ENCODE measurements at regions of chr12 and their contacts with region 1.

Region 1: DNA sequence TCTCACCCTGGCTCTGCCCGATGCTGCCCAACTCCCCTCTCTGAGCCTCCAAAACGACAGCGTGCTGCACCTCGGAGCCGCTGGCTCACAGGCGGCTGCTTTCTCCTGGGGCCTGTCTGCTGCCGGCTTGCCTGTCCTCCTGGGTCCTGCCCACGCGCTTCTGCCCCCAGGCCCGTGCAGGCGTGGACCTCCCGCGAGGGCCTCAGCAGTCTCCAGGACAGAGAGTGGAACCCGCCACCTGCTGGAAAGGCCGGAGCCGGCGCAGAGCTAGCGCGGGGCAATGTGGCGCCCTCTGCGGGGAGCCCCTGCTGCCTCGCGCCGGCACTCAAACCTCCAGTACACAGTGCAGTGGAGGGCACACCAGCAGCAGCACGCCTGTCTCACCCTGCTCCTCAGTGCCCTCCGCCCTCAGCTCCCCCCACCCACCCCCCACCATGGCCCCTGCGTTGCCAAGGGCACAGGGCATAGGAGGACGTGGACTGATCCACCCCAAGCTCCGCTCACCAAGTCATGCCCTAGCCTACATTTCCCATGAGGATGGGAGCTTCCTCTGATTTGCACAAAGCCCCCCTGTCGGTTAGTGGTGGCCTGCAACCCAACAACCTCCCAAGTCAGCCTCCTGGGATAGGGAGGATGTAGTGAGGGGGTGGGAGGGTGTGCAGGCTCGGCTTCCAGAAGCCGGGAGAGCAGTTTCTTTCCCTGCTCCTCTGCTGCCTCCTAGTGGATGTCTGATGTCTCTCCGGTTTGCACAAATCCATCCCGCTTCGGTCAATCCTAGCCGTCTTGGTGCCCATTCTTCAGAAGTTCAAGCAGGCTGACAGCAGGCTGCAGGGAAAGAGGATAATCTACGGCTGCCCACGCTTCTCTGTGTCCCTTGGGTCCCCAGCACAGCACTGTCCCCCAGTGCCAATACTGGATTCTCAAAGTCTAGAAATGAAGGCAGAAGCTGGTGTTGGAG is 25.2 kb downstream of the KRT8 start:
- DNase-seq: no peak
- H3K4me3 ChIP-seq: no peak overlapping the region
- H3K27me3 ChIP-seq: no peaks in the 10 kb centered on the region
- CTCF ChIP-seq: peak; percentile 93

Region 2: DNA sequence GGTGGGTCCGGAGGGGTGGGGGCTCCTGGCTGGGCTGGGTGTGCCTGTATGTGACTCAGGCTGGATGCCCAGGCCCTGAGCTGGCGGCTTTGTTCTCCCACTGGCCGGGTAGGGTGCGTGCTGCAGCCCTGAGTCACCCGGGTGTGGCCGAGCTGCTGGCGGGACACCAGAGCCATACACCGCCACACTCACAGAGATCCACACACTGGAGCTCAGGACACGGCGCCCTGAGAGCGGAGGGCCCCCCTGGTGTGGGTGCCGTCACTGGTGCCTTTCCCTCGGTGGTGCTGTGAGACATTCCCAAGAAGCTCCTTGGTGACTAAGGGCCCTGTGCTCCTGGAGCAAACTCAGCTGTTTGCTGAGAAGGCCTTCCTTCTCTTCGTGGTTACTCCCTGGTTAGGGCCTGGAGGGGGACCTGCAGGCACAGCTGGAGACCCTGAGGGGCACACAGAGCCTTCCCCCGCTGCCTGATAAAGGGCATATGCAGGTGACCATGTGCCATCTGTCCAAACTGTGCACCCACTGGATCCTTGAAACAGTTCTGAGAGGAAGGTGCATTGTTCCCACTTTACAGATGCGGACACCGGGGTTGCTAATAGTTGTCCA is 732.2 kb before region 1 on chr12:
- CTCF ChIA-PET with region 1: interaction called, 61 read pairs
- POLR2A ChIA-PET with region 1: no interaction called
- DNase-seq: peak; percentile 97
- H3K4me3 ChIP-seq: no peak overlapping the region
- H3K27me3 ChIP-seq: no peaks in the 10 kb centered on the region
- CTCF ChIP-seq: no peak

Region 3: DNA sequence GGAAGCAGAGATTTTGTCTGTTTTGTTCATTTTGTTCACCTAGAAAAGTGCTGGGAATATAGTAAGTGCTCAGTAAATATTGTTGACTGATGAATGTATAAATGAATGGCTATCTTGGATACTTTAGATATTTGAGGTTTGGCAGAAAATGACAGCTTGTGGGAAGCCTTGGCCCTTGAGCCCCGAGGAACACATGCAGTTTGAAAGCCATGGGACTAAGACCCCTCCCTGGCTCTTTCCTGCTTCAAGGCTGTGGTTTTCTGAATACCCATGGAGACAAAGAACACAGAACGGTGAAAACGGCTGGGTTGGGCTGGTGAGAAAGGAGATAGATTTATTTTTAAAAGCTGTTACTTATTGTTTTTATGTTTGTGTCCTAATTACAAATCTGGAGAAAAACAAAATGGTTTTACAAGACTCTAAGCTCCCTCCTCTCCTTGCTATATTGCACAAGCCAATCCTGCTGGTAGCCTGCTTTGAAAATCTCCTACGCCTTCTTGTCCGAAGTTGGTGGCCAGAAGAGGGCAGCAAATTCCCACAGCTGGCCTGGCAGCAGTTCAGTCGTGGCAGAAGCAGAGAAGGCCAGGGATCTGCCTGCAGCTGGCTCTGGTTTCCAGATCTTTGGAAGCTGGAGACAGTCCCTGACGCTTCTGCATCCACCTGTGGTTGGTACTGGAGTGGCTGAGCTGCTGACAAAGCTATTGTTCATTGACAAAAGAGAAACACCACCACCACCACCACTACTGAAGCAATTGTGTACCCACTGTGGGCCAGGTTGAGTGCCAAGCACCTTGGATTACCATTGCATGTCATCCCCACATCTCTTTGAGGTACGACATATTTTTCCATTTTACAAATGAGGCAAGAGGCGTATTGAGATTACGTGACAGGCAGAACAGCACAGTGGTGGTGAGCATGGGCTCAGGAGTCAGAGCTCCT is 507.2 kb before region 1 on chr12:
- CTCF ChIA-PET with region 1: interaction called, 142 read pairs
- POLR2A ChIA-PET with region 1: no interaction called
- DNase-seq: peak; percentile 47
- H3K4me3 ChIP-seq: no peak overlapping the region
- H3K27me3 ChIP-seq: peaks cover 12% of the 10 kb centered on the region
- CTCF ChIP-seq: peak; percentile 93

Region 4: GRCh38 chr12:52390739-52391617 is 488.7 kb before region 1 on chr12:
- CTCF ChIA-PET with region 1: interaction called, 21 read pairs
- POLR2A ChIA-PET with region 1: no interaction called
- DNase-seq: no peak
- H3K4me3 ChIP-seq: no peak overlapping the region
- H3K27me3 ChIP-seq: peaks cover 9% of the 10 kb centered on the region; the same call in 1 of the 2 replicates
- CTCF ChIP-seq: peak; percentile 76

Region 5: DNA sequence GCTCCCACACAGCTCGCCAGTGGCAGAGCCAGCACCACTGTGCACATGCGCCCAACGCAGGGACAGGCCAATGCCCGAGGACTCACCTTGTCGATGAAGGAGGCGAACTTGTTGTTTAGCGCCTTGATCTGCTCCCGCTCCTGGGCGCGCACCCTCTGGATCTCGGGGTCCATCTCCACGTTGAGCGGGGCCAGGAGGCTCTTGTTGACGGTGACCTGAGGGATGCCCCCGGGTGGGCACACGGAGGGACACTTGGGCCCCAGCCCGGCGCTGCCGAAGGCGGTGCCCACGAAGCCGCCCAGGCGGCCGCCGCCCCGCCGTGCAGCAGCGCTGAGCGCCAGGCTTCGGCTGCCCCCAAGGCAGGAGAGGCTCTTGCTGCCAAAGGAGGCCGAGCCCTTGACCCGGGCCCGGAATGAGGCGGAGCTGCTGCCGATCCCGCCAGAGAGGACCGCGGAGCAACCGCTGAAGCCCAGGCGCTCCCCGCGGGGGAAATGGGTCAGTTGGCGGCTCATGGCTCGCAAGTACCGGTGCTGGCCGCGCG is 278.7 kb before region 1 on chr12 and contains the start of gene KRT72:
- CTCF ChIA-PET with region 1: interaction called, 13 read pairs
- POLR2A ChIA-PET with region 1: no interaction called
- DNase-seq: no peak
- H3K4me3 ChIP-seq: no peak within 1 kb of the TSS
- H3K27me3 ChIP-seq: peaks cover 21% of the 10 kb centered on the region
- CTCF ChIP-seq: no peak
- polyA plus RNA-seq, gene KRT72: not detected in 2 replicates

Region 6: DNA sequence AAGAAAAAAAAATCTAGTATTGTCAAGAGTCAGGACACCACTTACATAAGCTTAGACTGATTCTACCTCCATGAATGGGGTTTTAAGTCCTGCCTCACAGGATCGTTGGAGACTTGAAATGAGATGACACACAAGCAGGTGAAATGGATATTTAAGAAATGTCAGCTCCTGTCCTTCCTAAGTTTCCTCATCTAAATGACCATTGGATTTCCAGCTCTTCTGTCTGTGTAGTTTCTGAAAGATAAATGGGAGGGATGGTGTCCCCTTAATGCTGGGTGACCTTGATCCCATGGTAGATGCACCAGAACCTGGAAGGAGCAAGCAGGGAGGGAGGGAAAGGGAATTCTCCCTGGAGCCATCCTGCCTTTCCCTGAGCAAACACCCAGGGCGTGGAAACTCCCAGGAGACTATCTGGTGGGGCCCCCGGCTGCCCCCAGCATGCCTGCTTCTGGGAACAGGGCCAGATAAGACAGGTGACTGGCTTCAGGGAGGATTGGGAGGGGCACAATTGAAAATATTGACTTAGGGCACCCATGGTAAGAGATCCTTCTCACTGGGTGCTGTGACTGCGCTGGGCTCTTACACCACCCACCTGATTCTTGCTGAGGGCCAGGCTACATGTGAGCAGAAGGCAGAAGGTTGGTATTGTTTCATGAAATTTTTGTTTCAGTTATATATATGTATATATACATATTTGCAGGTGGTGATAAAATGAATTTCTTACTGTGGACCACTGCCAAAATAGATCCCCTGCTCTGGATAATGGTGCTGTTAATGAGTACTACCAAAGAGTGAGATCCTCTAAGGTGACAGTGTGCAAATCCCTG is 15.6 kb after region 1 on chr12:
- CTCF ChIA-PET with region 1: interaction called, 104 read pairs
- POLR2A ChIA-PET with region 1: no interaction called
- DNase-seq: no peak
- H3K4me3 ChIP-seq: no peak overlapping the region
- H3K27me3 ChIP-seq: no peaks in the 10 kb centered on the region
- CTCF ChIP-seq: no peak

Region 7: GRCh38 chr12:52992699-52993557 is 113.3 kb after region 1 on chr12:
- CTCF ChIA-PET with region 1: interaction called, 722 read pairs
- POLR2A ChIA-PET with region 1: no interaction called
- DNase-seq: no peak
- H3K4me3 ChIP-seq: no peak overlapping the region
- H3K27me3 ChIP-seq: no peaks in the 10 kb centered on the region
- CTCF ChIP-seq: no peak

Measured in BJ (cell line).